SK-N-SH (cell line): ENCODE measurements at regions of chr5 and their contacts with region 1.

Region 1: GRCh38 chr5:69334793-69335268 is 2.2 kb upstream of the CCDC125 start:
- DNase-seq: peak; percentile 86
- H3K4me3 ChIP-seq: no peak overlapping the region; a peak in 1 of 4 replicates
- H3K27ac ChIP-seq: no peak overlapping the region
- H3K4me1 ChIP-seq: peaks cover 0 to 4% of the 10 kb centered on the region in 2 experiments; a peak in 1 of 4 replicates
- H3K27me3 ChIP-seq: no peaks in the 10 kb centered on the region
- CTCF ChIP-seq: peak; percentile 82
- EP300 ChIP-seq: no peak
- RAD21 ChIP-seq: peak; percentile 79

Region 2: GRCh38 chr5:69285448-69286116 is 49.2 kb before region 1 on chr5:
- CTCF ChIA-PET with region 1: interaction called, 22 read pairs
- POLR2A ChIA-PET with region 1: interaction called, 3 read pairs
- DNase-seq: no peak
- H3K4me3 ChIP-seq: no peak overlapping the region
- H3K27ac ChIP-seq: no peak overlapping the region
- H3K4me1 ChIP-seq: no peaks in the 10 kb centered on the region
- H3K27me3 ChIP-seq: no peaks in the 10 kb centered on the region
- CTCF ChIP-seq: no peak
- EP300 ChIP-seq: no peak
- RAD21 ChIP-seq: no peak

Region 3: GRCh38 chr5:69369369-69370121 is 34.7 kb after region 1 on chr5 and contains the starts of genes AK6, RAD17 and TAF9:
- CTCF ChIA-PET with region 1: no interaction called
- POLR2A ChIA-PET with region 1: no interaction called
- DNase-seq: peak; percentile 93
- H3K4me3 ChIP-seq: peak within 1 kb of the TSS; percentile 88 to 90
- H3K27ac ChIP-seq: peak within 1 kb of the TSS; percentile 96 to 97
- H3K4me1 ChIP-seq: peaks cover 7 to 13% of the 10 kb centered on the region in 2 experiments; a peak in 3 of 4 replicates
- H3K27me3 ChIP-seq: no peaks in the 10 kb centered on the region
- CTCF ChIP-seq: no peak
- EP300 ChIP-seq: no peak
- RAD21 ChIP-seq: no peak
- polyA plus RNA-seq, gene AK6: 12.9 and 15.1 TPM in 2 replicates
- polyA plus RNA-seq, gene RAD17: 15.4 and 16.9 TPM in 2 replicates
- polyA plus RNA-seq, gene TAF9: 106 and 138 TPM in 2 replicates